Kidney (tissue), 22 donors: ENCODE measurements at regions of chr13 and their contacts with region 1.

Region 1: GRCh38 chr13:110950819-110951570 is 36.1 kb upstream of the ANKRD10 start:
- DNase-seq: no peak
- H3K4me3 ChIP-seq: no peak overlapping the region
- H3K27ac ChIP-seq: no peak overlapping the region
- H3K4me1 ChIP-seq: no peaks in the 10 kb centered on the region
- H3K27me3 ChIP-seq: no peaks in the 10 kb centered on the region
- CTCF ChIP-seq: no peak

Region 2: DNA sequence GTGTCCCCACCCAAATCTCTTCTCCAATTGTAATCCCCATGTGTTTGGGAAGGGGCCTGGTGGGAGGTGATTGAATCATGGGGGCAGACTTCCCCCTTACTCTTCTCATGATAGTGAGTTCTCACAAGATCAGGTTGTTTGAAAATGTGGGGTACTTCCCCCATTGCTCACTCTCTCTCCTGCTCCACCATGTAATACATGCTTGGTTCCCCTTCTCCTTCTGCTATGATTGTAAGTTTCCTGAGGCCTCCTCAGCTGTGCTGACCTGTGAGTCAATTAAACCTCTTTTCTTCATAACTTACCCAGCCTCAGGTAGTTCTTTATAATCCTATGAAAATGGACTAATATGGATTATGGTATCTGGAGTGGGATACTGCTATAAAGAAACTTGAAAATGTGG is 213.4 kb before region 1 on chr13:
- intact Hi-C with region 1: no loop called
- DNase-seq: no peak
- H3K4me3 ChIP-seq: no peak overlapping the region
- H3K27ac ChIP-seq: no peak overlapping the region
- H3K4me1 ChIP-seq: no peaks in the 10 kb centered on the region
- H3K27me3 ChIP-seq: no peaks in the 10 kb centered on the region
- CTCF ChIP-seq: no peak

Region 3: GRCh38 chr13:112397108-112397507 is 1446.1 kb after region 1 on chr13:
- intact Hi-C with region 1: loop called (anchors 5 kb)
- DNase-seq: no peak
- H3K4me3 ChIP-seq: no peak overlapping the region
- H3K27ac ChIP-seq: no peak overlapping the region
- H3K4me1 ChIP-seq: no peaks in the 10 kb centered on the region
- H3K27me3 ChIP-seq: no peaks in the 10 kb centered on the region
- CTCF ChIP-seq: no peak